Naive thymus-derived CD4-positive, alpha-beta T cell (primary cell): ENCODE measurements at regions of chr14 and their contacts with region 1.

Region 1: GRCh38 chr14:89416002-89416995 is 734 bp downstream of the FOXN3 start:
- DNase-seq: peak; percentile 97 to 100 (median 98)
- ATAC-seq: peak; percentile 82
- H3K4me3 ChIP-seq: peak overlapping the region; percentile 83
- H3K4me3 Mint-ChIP-seq: peak overlapping the region; percentile 87 to 97 (median 94)
- H3K27ac ChIP-seq: peak overlapping the region; percentile 76
- H3K27ac Mint-ChIP-seq: peak overlapping the region; percentile 81 to 94 (median 90)
- H3K4me1 ChIP-seq: peaks cover 11 to 20% of the 10 kb centered on the region in 2 donors
- H3K4me1 Mint-ChIP-seq: peaks cover 37 to 70% (median 63%) of the 10 kb centered on the region in 7 donors
- H3K27me3 ChIP-seq: no peaks in the 10 kb centered on the region
- H3K27me3 Mint-ChIP-seq: peaks cover 0 to 2% (median 0%) of the 10 kb centered on the region in 5 donors

Region 2: GRCh38 chr14:88746052-88746451 is 670.2 kb before region 1 on chr14:
- CTCF ChIA-PET with region 1: no interaction called
- POLR2A ChIA-PET with region 1: no interaction called
- intact Hi-C with region 1: no loop called
- DNase-seq: no peak
- ATAC-seq: no peak
- H3K4me3 ChIP-seq: no peak overlapping the region
- H3K4me3 Mint-ChIP-seq: no peak overlapping the region
- H3K27ac ChIP-seq: no peak overlapping the region
- H3K27ac Mint-ChIP-seq: no peak overlapping the region
- H3K4me1 ChIP-seq: no peaks in the 10 kb centered on the region
- H3K4me1 Mint-ChIP-seq: peaks cover 0 to 2% (median 0%) of the 10 kb centered on the region in 7 donors
- H3K27me3 ChIP-seq: no peaks in the 10 kb centered on the region
- H3K27me3 Mint-ChIP-seq: no peaks in the 10 kb centered on the region

Region 3: GRCh38 chr14:89178802-89179535 is 237.3 kb before region 1 on chr14:
- CTCF ChIA-PET with region 1: no interaction called
- POLR2A ChIA-PET with region 1: interaction called, 3 read pairs
- intact Hi-C with region 1: loop called (anchors 1 kb)
- DNase-seq: no peak
- ATAC-seq: no peak
- H3K4me3 ChIP-seq: no peak overlapping the region
- H3K4me3 Mint-ChIP-seq: no peak overlapping the region
- H3K27ac ChIP-seq: no peak overlapping the region
- H3K27ac Mint-ChIP-seq: peak overlapping the region in 6 of 9 donors; percentile 10 to 66 (median 26)
- H3K4me1 ChIP-seq: peaks cover 0 to 4% of the 10 kb centered on the region in 2 donors
- H3K4me1 Mint-ChIP-seq: peaks cover 5 to 44% (median 29%) of the 10 kb centered on the region in 7 donors
- H3K27me3 ChIP-seq: no peaks in the 10 kb centered on the region
- H3K27me3 Mint-ChIP-seq: no peaks in the 10 kb centered on the region

Region 4: GRCh38 chr14:89258728-89259273 is 157.5 kb before region 1 on chr14:
- CTCF ChIA-PET with region 1: no interaction called
- POLR2A ChIA-PET with region 1: no interaction called
- intact Hi-C with region 1: no loop called
- DNase-seq: no peak
- ATAC-seq: no peak
- H3K4me3 ChIP-seq: no peak overlapping the region
- H3K4me3 Mint-ChIP-seq: peak overlapping the region in 1 of 10 donors; percentile 33
- H3K27ac ChIP-seq: no peak overlapping the region
- H3K27ac Mint-ChIP-seq: peak overlapping the region in 3 of 9 donors; percentile 23 to 64 (median 49)
- H3K4me1 ChIP-seq: no peaks in the 10 kb centered on the region
- H3K4me1 Mint-ChIP-seq: peaks cover 9 to 66% (median 52%) of the 10 kb centered on the region in 7 donors
- H3K27me3 ChIP-seq: no peaks in the 10 kb centered on the region
- H3K27me3 Mint-ChIP-seq: no peaks in the 10 kb centered on the region

Region 5: GRCh38 chr14:89336338-89336737 is 80.0 kb before region 1 on chr14:
- CTCF ChIA-PET with region 1: no interaction called
- POLR2A ChIA-PET with region 1: no interaction called
- intact Hi-C with region 1: loop called in 1 of 2 experiments (anchors 1 kb)
- DNase-seq: no peak
- ATAC-seq: no peak
- H3K4me3 ChIP-seq: no peak overlapping the region
- H3K4me3 Mint-ChIP-seq: no peak overlapping the region
- H3K27ac ChIP-seq: no peak overlapping the region
- H3K27ac Mint-ChIP-seq: peak overlapping the region in 4 of 9 donors; percentile 3 to 60 (median 28)
- H3K4me1 ChIP-seq: peaks cover 0 to 6% of the 10 kb centered on the region in 2 donors
- H3K4me1 Mint-ChIP-seq: peaks cover 22 to 66% (median 54%) of the 10 kb centered on the region in 7 donors
- H3K27me3 ChIP-seq: no peaks in the 10 kb centered on the region
- H3K27me3 Mint-ChIP-seq: no peaks in the 10 kb centered on the region

Region 6: GRCh38 chr14:89445273-89445973 is 29.1 kb after region 1 on chr14:
- CTCF ChIA-PET with region 1: no interaction called
- POLR2A ChIA-PET with region 1: no interaction called
- intact Hi-C with region 1: loop called in 1 of 2 experiments (anchors 2 kb)
- DNase-seq: peak in 1 of 9 donors; percentile 46
- ATAC-seq: peak; percentile 62
- H3K4me3 ChIP-seq: no peak overlapping the region
- H3K4me3 Mint-ChIP-seq: peak overlapping the region in 9 of 10 donors; percentile 2 to 73 (median 25)
- H3K27ac ChIP-seq: peak overlapping the region; percentile 50
- H3K27ac Mint-ChIP-seq: peak overlapping the region in 8 of 9 donors; percentile 62 to 88 (median 76)
- H3K4me1 ChIP-seq: peaks cover 12 to 61% of the 10 kb centered on the region in 2 donors
- H3K4me1 Mint-ChIP-seq: peaks cover 52 to 90% (median 80%) of the 10 kb centered on the region in 7 donors
- H3K27me3 ChIP-seq: no peaks in the 10 kb centered on the region
- H3K27me3 Mint-ChIP-seq: no peaks in the 10 kb centered on the region

Region 7: GRCh38 chr14:89720741-89721315 is 304.5 kb after region 1 on chr14:
- CTCF ChIA-PET with region 1: no interaction called
- POLR2A ChIA-PET with region 1: interaction called, 5 read pairs
- intact Hi-C with region 1: loop called (anchors 1 to 2 kb)
- DNase-seq: peak; percentile 43 to 91 (median 88)
- ATAC-seq: peak; percentile 96
- H3K4me3 ChIP-seq: peak overlapping the region; percentile 43
- H3K4me3 Mint-ChIP-seq: peak overlapping the region; percentile 65 to 81 (median 73)
- H3K27ac ChIP-seq: peak overlapping the region; percentile 70
- H3K27ac Mint-ChIP-seq: peak overlapping the region; percentile 94 to 99 (median 98)
- H3K4me1 ChIP-seq: peaks cover 76 to 78% of the 10 kb centered on the region in 2 donors
- H3K4me1 Mint-ChIP-seq: peaks cover 68 to 99% (median 92%) of the 10 kb centered on the region in 7 donors
- H3K27me3 ChIP-seq: no peaks in the 10 kb centered on the region
- H3K27me3 Mint-ChIP-seq: no peaks in the 10 kb centered on the region